Activated CD8-positive, alpha-beta T cell treated with anti-CD3 and anti-CD28 coated beads, Interleukin-2, amount 10 ng/mL, durations not matched to agents 7 days and 5 days (primary cell): ENCODE measurements at regions of chr13 and their contacts with region 1.

Region 1: GRCh38 chr13:95191821-95192563 is 109.3 kb downstream of the ABCC4 start:
- DNase-seq: peak; percentile 73
- ATAC-seq: peak; percentile 83
- H3K4me3 Mint-ChIP-seq: no peak overlapping the region
- H3K27ac Mint-ChIP-seq: no peak overlapping the region
- H3K4me1 Mint-ChIP-seq: peaks cover 15% of the 10 kb centered on the region
- H3K27me3 Mint-ChIP-seq: no peaks in the 10 kb centered on the region

Region 2: DNA sequence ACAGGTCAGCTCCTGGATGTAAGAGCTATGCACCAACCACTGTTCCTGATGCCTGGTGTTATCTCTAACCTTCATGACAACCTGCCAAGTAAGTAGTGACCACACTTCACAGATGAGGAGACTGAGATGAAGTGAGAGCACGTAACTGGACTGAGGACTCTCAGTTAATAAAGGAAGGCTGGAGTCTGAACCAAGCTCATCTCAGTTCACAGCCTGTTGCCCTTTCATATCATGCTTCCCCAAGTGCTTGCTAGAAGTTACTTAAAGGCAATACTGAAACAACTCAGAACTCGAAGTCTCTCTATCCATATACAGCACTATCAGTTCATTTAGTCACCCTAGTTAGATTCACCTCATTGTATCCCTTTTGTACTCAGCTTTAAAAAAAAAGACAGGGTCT is 10.4 kb before region 1 on chr13:
- CTCF ChIA-PET with region 1: interaction called, 18 read pairs
- POLR2A ChIA-PET with region 1: no interaction called
- DNase-seq: no peak
- ATAC-seq: no peak
- H3K4me3 Mint-ChIP-seq: no peak overlapping the region
- H3K27ac Mint-ChIP-seq: no peak overlapping the region
- H3K4me1 Mint-ChIP-seq: peaks cover 57% of the 10 kb centered on the region
- H3K27me3 Mint-ChIP-seq: no peaks in the 10 kb centered on the region

Region 3: DNA sequence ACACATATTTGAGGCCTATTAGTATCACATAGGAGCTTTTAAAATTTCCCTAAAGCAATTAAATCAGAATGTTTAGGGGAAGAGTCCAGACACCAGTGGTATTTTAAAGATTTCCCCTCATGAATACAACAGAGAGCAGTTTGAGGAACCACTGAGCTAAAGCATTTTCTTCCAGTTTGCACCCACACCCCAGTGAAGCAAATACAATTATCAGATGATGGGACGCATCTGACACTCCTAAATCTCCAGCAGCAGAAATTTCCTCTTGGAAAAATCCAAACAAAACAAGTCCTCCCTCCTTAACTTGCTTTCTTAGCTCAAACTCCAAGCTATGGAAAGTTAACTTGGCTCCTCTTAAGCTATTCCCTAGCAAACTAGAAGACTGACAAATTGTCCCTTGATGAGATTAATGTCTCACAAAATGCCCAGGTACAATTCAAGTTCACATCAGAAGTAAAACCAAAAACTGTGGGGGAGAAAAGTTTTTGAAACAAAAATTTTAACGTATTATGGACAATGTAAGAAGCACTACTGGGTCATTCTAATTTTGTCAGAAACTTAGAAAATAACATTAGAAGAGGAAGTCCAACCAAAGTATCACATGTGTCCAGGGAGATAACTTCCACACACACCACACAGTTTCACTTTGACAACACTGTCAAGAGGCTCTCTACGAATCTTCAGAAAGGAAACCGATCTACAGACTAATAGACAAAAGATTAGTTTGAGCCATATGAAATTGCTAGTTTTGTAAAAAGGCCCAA is 35.1 kb after region 1 on chr13:
- CTCF ChIA-PET with region 1: interaction called, 11 read pairs
- POLR2A ChIA-PET with region 1: no interaction called
- DNase-seq: no peak
- ATAC-seq: no peak
- H3K4me3 Mint-ChIP-seq: no peak overlapping the region
- H3K27ac Mint-ChIP-seq: no peak overlapping the region
- H3K4me1 Mint-ChIP-seq: peaks cover 15% of the 10 kb centered on the region
- H3K27me3 Mint-ChIP-seq: no peaks in the 10 kb centered on the region

Region 4: DNA sequence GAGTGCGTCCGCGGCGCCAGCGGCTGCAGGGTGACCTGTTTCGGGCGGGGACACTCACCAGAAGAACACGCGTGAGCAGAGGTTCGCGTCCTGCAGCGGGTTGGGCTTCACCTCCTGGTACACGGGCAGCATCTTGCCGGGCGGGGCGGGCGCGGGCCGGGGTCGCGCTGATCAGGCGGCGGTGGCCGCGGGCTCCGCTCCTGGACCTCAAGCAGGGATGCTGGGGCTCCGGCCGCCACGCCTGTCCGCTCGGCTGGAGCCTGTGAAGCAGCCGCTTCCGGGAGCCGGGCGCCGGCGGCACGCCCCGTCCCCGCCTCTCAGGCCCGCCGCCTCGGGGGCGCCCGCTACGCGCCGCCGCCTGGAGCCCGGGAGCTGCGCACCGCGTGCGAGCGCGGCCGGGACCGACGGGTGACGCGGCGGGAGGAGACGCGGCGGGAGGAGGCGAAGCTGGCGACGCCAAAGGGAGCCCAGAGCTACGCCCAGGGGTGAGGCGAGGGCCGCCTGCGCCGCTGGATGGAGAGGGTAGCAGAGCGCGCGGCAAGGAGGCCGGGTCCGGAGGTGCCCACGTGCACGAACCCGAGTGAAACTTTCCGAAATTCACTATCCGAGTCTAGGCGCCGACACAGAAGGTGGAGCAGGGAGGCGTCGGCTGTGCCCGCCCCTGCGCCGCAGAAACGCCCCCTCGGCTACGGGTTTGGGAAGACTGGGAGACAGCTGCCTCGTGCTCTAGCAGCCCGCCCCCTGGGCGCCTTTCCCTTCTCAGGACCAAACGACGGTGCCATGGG is 109.4 kb after region 1 on chr13 and contains the start of gene ABCC4:
- CTCF ChIA-PET with region 1: interaction called, 13 read pairs
- POLR2A ChIA-PET with region 1: no interaction called
- DNase-seq: peak; percentile 60
- ATAC-seq: peak; percentile 92
- H3K4me3 Mint-ChIP-seq: peak within 1 kb of the TSS; percentile 76
- H3K27ac Mint-ChIP-seq: peak within 1 kb of the TSS; percentile 40
- H3K4me1 Mint-ChIP-seq: peaks cover 23% of the 10 kb centered on the region
- H3K27me3 Mint-ChIP-seq: peaks cover 9% of the 10 kb centered on the region
- total RNA-seq, gene ABCC4: 5.7 to 6.1 TPM

Region 5: DNA sequence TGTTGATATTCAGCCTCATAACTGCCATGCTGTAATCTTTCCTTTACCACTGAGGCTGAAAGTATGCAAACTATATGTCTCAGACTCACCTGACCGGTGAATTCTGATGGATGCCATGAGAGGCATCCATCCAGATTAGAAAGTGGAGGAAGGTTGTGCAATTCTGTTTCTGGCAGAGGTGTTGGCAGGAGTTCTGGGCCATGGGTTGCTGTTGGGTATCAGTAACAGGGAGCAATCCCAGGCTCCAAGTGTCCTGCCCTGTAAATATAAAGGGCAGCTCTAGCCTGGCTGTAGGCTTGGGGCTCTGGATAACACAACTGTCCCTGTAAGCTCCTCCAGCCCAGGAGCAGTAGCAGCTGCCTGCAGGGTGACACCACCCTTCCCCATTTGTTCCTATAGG is 186.6 kb after region 1 on chr13:
- CTCF ChIA-PET with region 1: interaction called, 196 read pairs
- POLR2A ChIA-PET with region 1: no interaction called
- DNase-seq: no peak
- ATAC-seq: no peak
- H3K4me3 Mint-ChIP-seq: no peak overlapping the region
- H3K27ac Mint-ChIP-seq: no peak overlapping the region
- H3K4me1 Mint-ChIP-seq: peaks cover 4% of the 10 kb centered on the region
- H3K27me3 Mint-ChIP-seq: peaks cover 8% of the 10 kb centered on the region

Region 6: DNA sequence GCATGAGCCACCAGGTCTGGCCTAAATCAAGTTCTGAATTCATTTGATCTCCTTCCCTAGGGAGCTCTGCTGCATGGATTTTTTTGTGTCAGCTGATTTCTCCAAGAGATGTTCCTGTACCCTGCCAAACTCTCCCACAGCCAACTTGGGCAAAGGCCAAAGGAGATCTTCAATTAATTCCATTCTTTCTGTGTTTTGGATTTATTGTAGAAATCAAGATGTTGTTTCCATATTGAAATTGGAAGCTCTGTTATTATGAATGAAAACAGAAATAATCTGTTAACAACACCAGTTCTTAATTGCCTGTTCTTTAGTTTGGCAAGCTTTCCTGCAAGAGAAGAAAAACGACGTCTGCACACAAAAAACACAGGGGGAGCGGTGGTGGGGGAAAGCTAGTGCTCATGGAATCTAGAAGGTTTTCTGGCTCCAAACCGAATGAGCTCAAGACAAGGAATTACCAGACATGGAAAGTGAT is 195.8 kb after region 1 on chr13:
- CTCF ChIA-PET with region 1: interaction called, 196 read pairs
- POLR2A ChIA-PET with region 1: no interaction called
- DNase-seq: no peak
- ATAC-seq: no peak
- H3K4me3 Mint-ChIP-seq: no peak overlapping the region
- H3K27ac Mint-ChIP-seq: no peak overlapping the region
- H3K4me1 Mint-ChIP-seq: no peaks in the 10 kb centered on the region
- H3K27me3 Mint-ChIP-seq: peaks cover 22% of the 10 kb centered on the region

Region 7: GRCh38 chr13:95480131-95480545 is 288.1 kb after region 1 on chr13:
- CTCF ChIA-PET with region 1: interaction called, 22 read pairs
- POLR2A ChIA-PET with region 1: no interaction called
- DNase-seq: no peak
- ATAC-seq: no peak
- H3K4me3 Mint-ChIP-seq: no peak overlapping the region
- H3K27ac Mint-ChIP-seq: no peak overlapping the region
- H3K4me1 Mint-ChIP-seq: peaks cover 18% of the 10 kb centered on the region
- H3K27me3 Mint-ChIP-seq: no peaks in the 10 kb centered on the region